Activated CD4-positive, alpha-beta T cell treated with anti-CD3 and anti-CD28 coated beads, Interleukin-2, amount 10 ng/mL, durations not matched to agents 24 days and 14 days (primary cell): ENCODE measurements at regions of chr20 and their contacts with region 1.

Region 1: GRCh38 chr20:58650776-58651558 is at the start of gene STX16:
- DNase-seq: peak; percentile 95
- H3K4me3 Mint-ChIP-seq: peak within 1 kb of the TSS; percentile 99
- H3K27ac Mint-ChIP-seq: peak within 1 kb of the TSS; percentile 99
- H3K4me1 Mint-ChIP-seq: peaks cover 20% of the 10 kb centered on the region
- H3K27me3 Mint-ChIP-seq: no peaks in the 10 kb centered on the region
- total RNA-seq, gene STX16: 106 and 110 TPM in 2 replicates

Region 2: GRCh38 chr20:58236612-58237330 is 414.2 kb before region 1 on chr20:
- intact Hi-C with region 1: loop called (anchors 2 kb)
- DNase-seq: peak; percentile 96
- H3K4me3 Mint-ChIP-seq: peak overlapping the region; percentile 91
- H3K27ac Mint-ChIP-seq: peak overlapping the region; percentile 94
- H3K4me1 Mint-ChIP-seq: peaks cover 23% of the 10 kb centered on the region
- H3K27me3 Mint-ChIP-seq: no peaks in the 10 kb centered on the region

Region 3: GRCh38 chr20:58634521-58635278 is 16.3 kb before region 1 on chr20:
- intact Hi-C with region 1: loop called (anchors 1 kb)
- DNase-seq: no peak
- H3K4me3 Mint-ChIP-seq: peak overlapping the region; percentile 26
- H3K27ac Mint-ChIP-seq: peak overlapping the region; percentile 74
- H3K4me1 Mint-ChIP-seq: peaks cover 13% of the 10 kb centered on the region
- H3K27me3 Mint-ChIP-seq: peaks cover 9% of the 10 kb centered on the region

Region 4: DNA sequence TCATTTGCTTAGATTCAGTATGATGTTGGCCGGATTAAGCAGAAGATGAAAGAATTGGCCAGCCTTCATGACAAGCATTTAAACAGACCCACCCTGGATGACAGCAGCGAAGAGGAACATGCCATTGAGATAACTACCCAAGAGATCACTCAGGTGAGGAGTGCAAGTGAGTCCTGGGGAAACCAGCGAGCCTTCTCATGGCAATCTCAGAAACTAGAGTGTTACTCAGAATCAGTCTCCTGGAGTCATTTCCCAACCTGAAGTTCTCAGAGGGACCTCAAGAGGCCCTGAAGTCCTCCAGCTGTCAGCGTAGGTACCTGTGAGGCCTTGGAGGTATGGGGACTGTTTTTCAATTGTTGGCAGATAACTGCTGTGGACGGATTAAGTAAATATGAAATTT is 17.0 kb after region 1 on chr20:
- intact Hi-C with region 1: no loop called
- DNase-seq: no peak
- H3K4me3 Mint-ChIP-seq: no peak overlapping the region
- H3K27ac Mint-ChIP-seq: no peak overlapping the region
- H3K4me1 Mint-ChIP-seq: peaks cover 31% of the 10 kb centered on the region
- H3K27me3 Mint-ChIP-seq: no peaks in the 10 kb centered on the region

Region 5: DNA sequence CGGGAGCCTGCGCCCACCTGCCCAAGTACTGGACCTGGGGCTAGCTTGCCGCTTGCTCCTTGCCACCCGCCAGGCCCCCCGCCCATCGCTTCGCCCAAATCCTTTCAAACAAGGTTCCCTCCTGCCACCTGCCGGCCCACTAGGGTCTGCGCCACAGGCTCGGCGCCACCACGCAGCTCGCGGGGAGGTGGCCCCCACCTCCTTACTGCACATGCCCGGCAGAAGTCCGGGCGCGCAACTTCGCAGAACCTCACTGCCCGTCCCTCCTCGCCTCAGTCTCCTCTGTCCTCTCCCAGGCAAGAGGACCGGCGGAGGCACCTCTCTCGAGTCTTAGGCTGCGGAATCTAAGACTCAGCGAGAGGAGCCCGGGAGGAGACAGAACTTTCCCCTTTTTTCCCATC is 188.5 kb after region 1 on chr20:
- intact Hi-C with region 1: loop called (anchors 1 kb)
- DNase-seq: peak; percentile 82
- H3K4me3 Mint-ChIP-seq: peak overlapping the region; percentile 62
- H3K27ac Mint-ChIP-seq: no peak overlapping the region
- H3K4me1 Mint-ChIP-seq: peaks cover 4% of the 10 kb centered on the region
- H3K27me3 Mint-ChIP-seq: peaks cover 67% of the 10 kb centered on the region

Region 6: GRCh38 chr20:58980700-58981627 is 330.0 kb after region 1 on chr20 and contains the start of gene NELFCD:
- intact Hi-C with region 1: loop called (anchors 1 kb)
- DNase-seq: peak; percentile 97
- H3K4me3 Mint-ChIP-seq: peak within 1 kb of the TSS; percentile 94
- H3K27ac Mint-ChIP-seq: peak within 1 kb of the TSS; percentile 91
- H3K4me1 Mint-ChIP-seq: peaks cover 27% of the 10 kb centered on the region
- H3K27me3 Mint-ChIP-seq: peaks cover 9% of the 10 kb centered on the region
- total RNA-seq, gene NELFCD: 119 and 120 TPM in 2 replicates